GM12878 (cell line): ENCODE measurements at regions of chr2 and their contacts with region 1.

Region 1: GRCh38 chr2:39227628-39228412 is 15.9 kb downstream of the CDKL4 start:
- DNase-seq: peak; percentile 28
- ATAC-seq: peak; percentile 93
- H3K4me3 ChIP-seq: no peak overlapping the region
- H3K27ac ChIP-seq: no peak overlapping the region
- H3K4me1 ChIP-seq: peaks cover 3% of the 10 kb centered on the region; the same call in 1 of the 2 replicates
- H3K27me3 ChIP-seq: no peaks in the 10 kb centered on the region
- CTCF ChIP-seq: peak; percentile 78 to 89 (median 79); a peak in 5 of 6 replicates
- EP300 ChIP-seq: no peak
- POLR2A ChIP-seq: no peak
- RAD21 ChIP-seq: peak; percentile 90

Region 2: DNA sequence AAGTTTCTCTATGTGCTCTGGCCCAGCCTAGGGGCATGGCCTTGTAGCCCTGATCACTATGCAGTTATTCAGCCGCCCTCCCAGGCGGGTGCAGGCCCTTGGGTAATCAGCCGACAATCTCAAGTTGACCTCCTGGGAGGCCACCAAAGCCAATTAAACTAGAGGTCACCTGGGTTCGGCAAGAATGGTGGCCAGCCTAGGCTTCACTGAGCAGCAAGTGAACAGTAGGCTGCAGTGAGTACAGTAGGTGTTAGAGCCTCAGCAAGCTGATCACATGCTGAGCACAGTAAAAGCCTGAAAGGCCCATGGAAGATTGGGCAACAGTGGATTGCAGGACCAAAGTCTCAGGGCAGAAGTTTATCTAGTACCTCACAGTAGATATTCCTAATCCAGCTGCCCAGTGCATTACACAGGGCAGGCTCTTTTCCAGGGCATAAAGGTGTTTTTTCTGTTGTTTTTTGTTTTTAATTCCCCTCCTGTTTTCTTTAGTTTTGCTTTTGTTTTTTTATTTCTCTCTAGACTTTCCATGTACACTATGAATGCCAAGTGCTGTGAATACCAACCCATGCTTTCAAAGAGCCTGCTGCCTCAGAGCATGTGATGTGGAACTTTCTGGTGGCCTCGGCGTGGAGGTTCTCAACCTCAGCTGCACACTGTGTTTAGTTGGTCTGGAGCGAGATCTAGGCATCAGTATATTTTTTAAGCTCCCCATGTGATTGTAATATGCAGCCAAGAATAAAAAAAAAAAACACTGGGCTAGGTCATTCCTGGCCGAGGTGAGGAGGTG is 794.8 kb before region 1 on chr2:
- CTCF ChIA-PET with region 1: no interaction called
- POLR2A ChIA-PET with region 1: no interaction called
- RAD21 ChIA-PET with region 1: no interaction called
- SMC1A ChIA-PET with region 1: no interaction called
- in situ Hi-C with region 1: no loop called
- intact Hi-C with region 1: no loop called
- DNase-seq: no peak
- ATAC-seq: no peak
- H3K4me3 ChIP-seq: no peak overlapping the region
- H3K27ac ChIP-seq: no peak overlapping the region
- H3K4me1 ChIP-seq: peaks cover 4% of the 10 kb centered on the region
- H3K27me3 ChIP-seq: no peaks in the 10 kb centered on the region
- CTCF ChIP-seq: no peak
- EP300 ChIP-seq: no peak
- POLR2A ChIP-seq: no peak
- RAD21 ChIP-seq: no peak

Region 3: DNA sequence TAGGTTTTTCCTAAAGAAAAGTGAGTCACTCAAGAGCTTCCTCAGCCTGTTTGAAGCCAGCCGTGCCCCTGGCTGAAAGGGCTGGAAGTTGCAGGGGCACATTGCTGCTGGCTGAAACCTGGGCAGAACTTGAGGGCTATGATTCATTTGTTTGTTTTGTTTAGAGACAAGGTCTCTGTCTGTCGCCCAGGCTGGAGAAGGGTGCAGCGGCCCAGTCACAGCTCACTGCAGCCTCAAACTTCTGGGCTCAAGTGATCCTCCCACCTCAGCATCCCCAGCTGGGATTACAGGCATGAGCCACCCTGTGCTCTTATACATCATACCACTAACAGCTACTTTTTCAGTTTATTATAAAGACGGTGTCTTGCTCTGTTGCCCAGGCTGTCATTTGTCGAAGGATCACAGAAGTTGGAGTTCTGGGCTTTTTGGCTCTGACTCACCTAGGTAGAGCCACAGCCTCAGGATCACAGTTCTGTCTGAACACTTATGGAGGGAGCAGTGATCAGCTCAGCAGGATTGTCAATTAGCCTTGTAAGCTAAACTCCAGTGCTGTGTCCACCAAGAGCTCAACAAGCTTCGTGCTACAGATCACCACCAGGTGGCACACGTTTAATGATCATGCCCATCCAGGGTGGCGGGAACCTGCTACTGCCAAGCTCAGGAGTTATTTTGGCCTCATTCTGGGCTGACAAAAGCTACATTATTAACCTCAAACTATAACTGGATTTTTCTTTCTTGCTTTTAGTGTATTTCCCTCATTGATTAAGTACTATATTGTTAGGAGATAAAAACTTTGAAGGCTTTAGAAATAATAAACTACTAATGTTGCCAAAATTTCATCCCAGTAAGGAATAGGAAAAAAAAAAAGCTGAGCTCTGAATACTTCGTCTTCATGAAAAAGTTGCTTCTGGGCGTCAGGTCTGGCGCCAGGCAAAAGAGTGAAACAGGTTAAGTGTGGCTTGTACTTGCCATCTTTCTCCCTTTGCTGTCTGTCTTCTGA is 280.3 kb before region 1 on chr2:
- CTCF ChIA-PET with region 1: interaction called, 319 read pairs
- POLR2A ChIA-PET with region 1: interaction called, 3 read pairs
- RAD21 ChIA-PET with region 1: interaction called, 160 read pairs
- SMC1A ChIA-PET with region 1: interaction called, 145 read pairs
- in situ Hi-C with region 1: loop called (anchors 5 kb)
- intact Hi-C with region 1: loop called (anchors 1 kb)
- DNase-seq: peak; percentile 16
- ATAC-seq: peak; percentile 98
- H3K4me3 ChIP-seq: no peak overlapping the region
- H3K27ac ChIP-seq: no peak overlapping the region
- H3K4me1 ChIP-seq: no peaks in the 10 kb centered on the region
- H3K27me3 ChIP-seq: no peaks in the 10 kb centered on the region
- CTCF ChIP-seq: peak; percentile 72 to 77 (median 74)
- EP300 ChIP-seq: no peak
- POLR2A ChIP-seq: no peak
- RAD21 ChIP-seq: peak; percentile 74

Region 4: GRCh38 chr2:39059366-39059952 is 168.4 kb before region 1 on chr2:
- CTCF ChIA-PET with region 1: interaction called, 285 read pairs
- POLR2A ChIA-PET with region 1: interaction called, 3 read pairs
- RAD21 ChIA-PET with region 1: interaction called, 125 read pairs
- SMC1A ChIA-PET with region 1: interaction called, 75 read pairs
- in situ Hi-C with region 1: loop called (anchors 5 kb)
- intact Hi-C with region 1: loop called (anchors 1 kb)
- DNase-seq: no peak
- ATAC-seq: peak; percentile 73
- H3K4me3 ChIP-seq: no peak overlapping the region
- H3K27ac ChIP-seq: no peak overlapping the region
- H3K4me1 ChIP-seq: no peaks in the 10 kb centered on the region
- H3K27me3 ChIP-seq: no peaks in the 10 kb centered on the region
- CTCF ChIP-seq: peak; percentile 44 to 68 (median 54); a peak in 5 of 6 replicates
- EP300 ChIP-seq: no peak
- POLR2A ChIP-seq: no peak
- RAD21 ChIP-seq: peak; percentile 74

Region 5: DNA sequence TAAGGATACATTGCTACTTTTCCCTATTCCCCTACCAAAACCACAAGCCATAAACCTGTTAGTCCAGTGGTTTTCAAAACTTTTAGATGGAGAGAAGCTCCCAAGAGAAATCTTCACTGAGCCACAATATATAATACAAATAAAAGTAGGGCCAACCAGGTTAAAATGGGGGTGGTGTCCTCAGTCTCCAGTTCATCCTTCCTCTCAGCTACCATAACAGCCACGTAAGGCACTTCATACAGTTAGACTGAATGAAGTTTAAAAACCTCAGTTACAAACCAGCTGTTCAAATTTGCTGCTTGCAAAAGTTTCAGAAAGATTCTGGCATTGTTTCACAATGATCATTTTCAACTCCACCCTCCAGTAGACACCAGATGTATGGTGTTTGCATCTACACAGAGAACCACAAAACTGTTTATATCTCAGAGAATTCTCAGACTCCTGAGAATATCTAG is 132.9 kb before region 1 on chr2:
- CTCF ChIA-PET with region 1: interaction called, 18 read pairs
- POLR2A ChIA-PET with region 1: no interaction called
- RAD21 ChIA-PET with region 1: interaction called, 6 read pairs
- SMC1A ChIA-PET with region 1: interaction called, 6 read pairs
- in situ Hi-C with region 1: no loop called
- intact Hi-C with region 1: no loop called
- DNase-seq: peak; percentile 71
- ATAC-seq: peak; percentile 76
- H3K4me3 ChIP-seq: peak overlapping the region; percentile 22; the same call in 1 of the 2 replicates
- H3K27ac ChIP-seq: peak overlapping the region; percentile 77
- H3K4me1 ChIP-seq: peaks cover 38% of the 10 kb centered on the region
- H3K27me3 ChIP-seq: no peaks in the 10 kb centered on the region
- CTCF ChIP-seq: no peak
- EP300 ChIP-seq: 0 out of 4 replicates have a peak, but pooled peaks of 1 of the 2 experiments have one; percentile 30
- POLR2A ChIP-seq: no peak
- RAD21 ChIP-seq: no peak

Region 6: DNA sequence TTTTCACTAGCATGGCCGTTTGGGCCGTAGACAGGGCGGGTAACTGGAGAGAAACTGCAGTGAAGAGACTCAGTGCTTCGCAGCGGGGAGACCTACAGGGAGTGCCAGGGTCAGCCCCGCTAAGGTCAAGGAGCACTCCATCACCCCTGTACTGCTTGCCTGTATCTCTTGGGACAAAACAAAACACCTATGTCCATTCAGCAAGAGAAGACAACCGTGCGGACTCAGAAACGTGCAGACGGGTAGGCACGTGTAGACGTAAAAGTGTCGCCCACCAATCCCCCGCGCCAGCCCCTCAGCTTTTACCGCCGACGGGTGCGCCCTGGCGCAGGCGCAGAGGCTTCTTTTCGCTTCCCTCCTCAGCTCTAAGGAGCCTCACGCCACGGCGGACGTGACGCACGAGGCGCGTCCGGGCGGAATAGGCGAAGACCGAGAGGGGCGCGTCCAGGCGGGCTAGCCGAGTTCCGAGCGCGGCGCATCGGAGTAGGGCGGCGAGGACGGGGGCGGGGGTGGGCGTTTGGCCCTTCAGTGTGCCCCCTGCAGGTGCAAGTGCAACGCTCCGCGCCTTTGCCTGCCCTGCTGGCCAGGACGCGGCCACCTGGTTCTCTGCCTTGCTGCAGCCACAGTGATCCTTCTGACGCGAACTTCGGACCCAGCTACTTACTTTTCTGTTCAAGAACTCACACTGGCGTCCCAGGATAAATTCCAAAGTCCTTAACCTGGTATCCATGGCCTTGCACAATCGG is 103.6 kb before region 1 on chr2:
- CTCF ChIA-PET with region 1: interaction called, 98 read pairs
- POLR2A ChIA-PET with region 1: interaction called, 17 read pairs
- RAD21 ChIA-PET with region 1: interaction called, 83 read pairs
- SMC1A ChIA-PET with region 1: interaction called, 50 read pairs
- in situ Hi-C with region 1: no loop called
- intact Hi-C with region 1: loop called (anchors 1 kb)
- DNase-seq: peak; percentile 89
- ATAC-seq: peak; percentile 77
- H3K4me3 ChIP-seq: peak overlapping the region; percentile 81
- H3K27ac ChIP-seq: peak overlapping the region; percentile 78
- H3K4me1 ChIP-seq: peaks cover 12% of the 10 kb centered on the region
- H3K27me3 ChIP-seq: no peaks in the 10 kb centered on the region
- CTCF ChIP-seq: peak; percentile 39 to 80 (median 58); a peak in 5 of 6 replicates
- EP300 ChIP-seq: peak; percentile 22 to 71; a peak in 2 of 4 replicates
- POLR2A ChIP-seq: peak; percentile 82
- RAD21 ChIP-seq: peak; percentile 36; the same call in 1 of the 2 replicates